GM12878 (cell line): ENCODE measurements at regions of chr1 and their contacts with region 1.

Region 1: DNA sequence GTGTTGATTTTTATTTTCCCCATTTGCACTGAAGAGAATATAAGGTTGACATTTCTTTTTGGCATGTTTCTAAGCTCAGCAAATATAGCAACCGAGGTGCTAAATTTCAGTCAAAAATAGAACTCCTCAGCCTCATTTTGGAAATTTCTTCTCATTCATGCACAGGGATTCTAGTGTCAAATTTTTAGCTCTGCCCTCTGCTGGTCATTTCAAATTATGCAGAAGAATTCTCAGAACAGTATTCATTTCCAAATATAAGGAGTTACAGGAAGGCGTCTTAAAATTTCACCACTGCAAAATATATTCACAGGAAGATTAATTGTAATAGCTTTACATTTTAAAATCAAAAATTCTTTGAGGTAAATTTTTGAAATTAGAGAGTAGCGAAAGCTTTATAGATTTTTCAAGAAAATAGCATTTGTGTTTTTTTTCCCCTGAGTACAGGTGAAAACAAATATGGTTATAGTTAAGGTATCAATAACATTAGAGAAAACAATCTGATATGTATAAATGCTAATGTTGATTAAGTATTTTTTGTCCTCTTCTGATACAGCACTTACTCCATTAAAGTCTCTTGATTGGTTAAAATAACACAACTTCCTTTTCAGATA is 57.9 kb downstream of the FMN2 start:
- DNase-seq: no peak
- ATAC-seq: peak; percentile 56
- H3K4me3 ChIP-seq: no peak overlapping the region
- H3K27ac ChIP-seq: no peak overlapping the region
- H3K4me1 ChIP-seq: no peaks in the 10 kb centered on the region
- H3K27me3 ChIP-seq: no peaks in the 10 kb centered on the region
- CTCF ChIP-seq: peak; percentile 48 to 55 (median 54)
- EP300 ChIP-seq: no peak
- POLR2A ChIP-seq: no peak
- RAD21 ChIP-seq: peak; percentile 26; the same call in 1 of the 2 replicates

Region 2: DNA sequence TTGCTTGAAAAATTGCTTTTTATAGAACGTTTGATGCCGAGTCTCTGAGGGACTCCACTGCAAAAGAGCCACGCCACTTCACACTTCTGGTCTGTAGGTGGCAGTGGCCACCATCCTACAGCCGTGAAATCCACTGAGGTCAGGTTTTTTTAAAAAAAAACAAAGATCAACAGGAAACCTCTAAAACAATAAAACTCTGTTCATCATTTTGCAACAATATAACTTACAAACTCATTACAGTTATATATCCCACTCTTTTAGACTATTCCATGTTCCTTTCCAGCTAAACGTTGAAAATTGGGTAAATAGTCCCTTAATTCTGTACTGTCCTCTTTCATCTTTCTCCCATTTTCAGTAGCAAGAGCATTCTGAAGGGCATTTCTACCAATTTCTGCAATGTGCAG is 122.5 kb before region 1 on chr1:
- CTCF ChIA-PET with region 1: interaction called, 20 read pairs
- POLR2A ChIA-PET with region 1: no interaction called
- RAD21 ChIA-PET with region 1: no interaction called
- SMC1A ChIA-PET with region 1: interaction called, 5 read pairs
- in situ Hi-C with region 1: no loop called
- intact Hi-C with region 1: loop called (anchors 1 kb)
- DNase-seq: no peak
- ATAC-seq: peak; percentile 88
- H3K4me3 ChIP-seq: no peak overlapping the region
- H3K27ac ChIP-seq: no peak overlapping the region
- H3K4me1 ChIP-seq: no peaks in the 10 kb centered on the region
- H3K27me3 ChIP-seq: no peaks in the 10 kb centered on the region
- CTCF ChIP-seq: peak; percentile 66 to 69 (median 67)
- EP300 ChIP-seq: no peak
- POLR2A ChIP-seq: no peak
- RAD21 ChIP-seq: peak; percentile 70

Region 3: GRCh38 chr1:240116831-240117769 is 32.5 kb before region 1 on chr1:
- CTCF ChIA-PET with region 1: no interaction called
- POLR2A ChIA-PET with region 1: no interaction called
- RAD21 ChIA-PET with region 1: no interaction called
- SMC1A ChIA-PET with region 1: no interaction called
- in situ Hi-C with region 1: no loop called
- intact Hi-C with region 1: no loop called
- DNase-seq: no peak
- ATAC-seq: no peak
- H3K4me3 ChIP-seq: no peak overlapping the region
- H3K27ac ChIP-seq: no peak overlapping the region
- H3K4me1 ChIP-seq: no peaks in the 10 kb centered on the region
- H3K27me3 ChIP-seq: no peaks in the 10 kb centered on the region
- CTCF ChIP-seq: no peak
- EP300 ChIP-seq: no peak
- POLR2A ChIP-seq: no peak
- RAD21 ChIP-seq: no peak

Region 4: DNA sequence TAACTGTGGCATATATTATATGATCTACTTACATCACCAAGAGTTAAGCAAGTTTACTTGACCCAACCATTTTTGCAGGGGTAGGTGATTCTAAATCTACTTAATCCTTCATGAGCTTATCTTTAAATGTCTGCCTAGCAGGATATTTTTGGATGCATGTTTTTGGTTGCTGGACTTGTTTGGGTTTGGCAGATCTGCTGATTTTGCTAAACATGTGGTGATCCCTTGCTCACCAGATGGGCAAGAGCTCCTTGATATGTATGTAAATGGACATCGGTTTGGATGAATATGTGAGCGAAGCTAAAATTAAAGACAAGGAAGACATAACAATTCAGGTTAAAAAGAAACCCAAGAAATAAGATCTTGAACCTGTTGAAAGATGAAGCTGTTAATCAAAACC is 21.2 kb before region 1 on chr1:
- CTCF ChIA-PET with region 1: interaction called, 11 read pairs
- POLR2A ChIA-PET with region 1: no interaction called
- RAD21 ChIA-PET with region 1: no interaction called
- SMC1A ChIA-PET with region 1: no interaction called
- in situ Hi-C with region 1: no loop called
- intact Hi-C with region 1: no loop called
- DNase-seq: no peak
- ATAC-seq: no peak
- H3K4me3 ChIP-seq: no peak overlapping the region
- H3K27ac ChIP-seq: no peak overlapping the region
- H3K4me1 ChIP-seq: no peaks in the 10 kb centered on the region
- H3K27me3 ChIP-seq: no peaks in the 10 kb centered on the region
- CTCF ChIP-seq: no peak
- EP300 ChIP-seq: no peak
- POLR2A ChIP-seq: no peak
- RAD21 ChIP-seq: no peak

Region 5: DNA sequence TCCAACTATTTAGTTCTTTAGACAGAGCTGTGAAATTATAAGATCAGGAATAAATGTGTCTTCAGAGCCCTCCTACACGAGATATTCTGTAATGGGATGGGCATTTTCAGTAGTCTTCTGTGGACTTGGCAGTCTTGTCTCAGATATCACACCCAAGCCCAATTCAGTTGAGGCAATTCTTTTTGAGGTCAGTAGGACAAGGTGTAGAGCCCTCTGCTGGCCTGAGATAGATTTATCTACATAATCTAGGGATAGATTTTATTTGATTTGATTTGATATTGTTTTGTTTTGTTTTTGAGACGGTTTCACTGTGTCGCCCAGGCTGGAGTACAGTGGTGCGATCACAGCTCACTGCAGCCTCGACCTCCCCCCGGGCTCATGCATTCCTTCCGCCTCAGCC is 19.6 kb after region 1 on chr1:
- CTCF ChIA-PET with region 1: interaction called, 10 read pairs
- POLR2A ChIA-PET with region 1: no interaction called
- RAD21 ChIA-PET with region 1: no interaction called
- SMC1A ChIA-PET with region 1: no interaction called
- in situ Hi-C with region 1: no loop called
- intact Hi-C with region 1: no loop called
- DNase-seq: no peak
- ATAC-seq: peak; percentile 22; the same call in 1 of the 3 replicates
- H3K4me3 ChIP-seq: no peak overlapping the region
- H3K27ac ChIP-seq: no peak overlapping the region
- H3K4me1 ChIP-seq: no peaks in the 10 kb centered on the region
- H3K27me3 ChIP-seq: no peaks in the 10 kb centered on the region
- CTCF ChIP-seq: peak in 2 of 3 experiments; percentile 6 to 12; a peak in 2 of 6 replicates
- EP300 ChIP-seq: no peak
- POLR2A ChIP-seq: no peak
- RAD21 ChIP-seq: no peak